Activated CD4-positive, alpha-beta T cell treated with anti-CD3 and anti-CD28 coated beads for 36 hours (primary cell): ENCODE measurements at regions of chr16 and their contacts with region 1.

Region 1: DNA sequence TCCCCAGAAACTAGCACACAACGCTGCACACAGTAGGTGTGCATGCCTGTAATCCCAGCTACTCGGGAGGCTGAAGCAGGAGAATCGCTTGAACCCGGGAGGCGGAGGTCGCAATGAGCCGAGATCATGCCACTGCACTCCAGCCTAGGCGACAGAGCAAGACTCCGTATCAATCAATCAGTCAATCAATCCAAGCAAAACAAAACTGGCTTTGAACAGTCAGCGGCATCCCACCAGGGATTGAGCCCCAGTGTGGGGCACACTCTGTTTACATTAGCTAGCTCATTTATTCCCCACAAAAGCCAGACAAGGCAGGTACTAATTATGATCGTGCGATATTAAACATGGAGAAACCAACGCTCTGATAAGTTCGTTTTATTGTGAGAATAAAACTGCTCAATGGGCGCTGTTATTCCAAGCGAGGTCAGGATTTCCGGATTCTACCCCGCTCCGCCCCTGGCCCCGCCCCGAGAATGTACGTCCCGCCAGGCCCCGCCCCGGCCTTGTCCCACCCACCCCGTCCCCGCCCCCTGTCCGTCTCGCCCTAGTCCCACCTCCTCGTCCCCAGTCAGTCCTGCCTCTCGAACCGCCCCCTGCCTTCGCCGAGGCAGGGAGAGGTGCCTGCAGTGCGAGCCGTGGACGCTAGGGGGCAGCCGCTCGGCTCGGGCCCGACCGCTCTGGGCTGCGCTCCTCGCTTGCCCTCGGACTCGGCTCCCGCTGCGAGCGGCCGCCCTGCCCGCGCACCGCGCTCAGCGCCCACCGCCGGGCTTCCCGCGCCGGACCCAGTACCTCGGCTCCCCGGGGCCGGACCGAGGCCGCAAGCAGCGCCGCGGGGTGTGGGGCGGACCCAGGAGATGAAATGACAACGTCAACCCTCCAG is at the start of gene VPS4A:
- DNase-seq: peak; percentile 98
- ATAC-seq: peak; percentile 97
- H3K4me3 Mint-ChIP-seq: peak within 1 kb of the TSS; percentile 100
- H3K27ac Mint-ChIP-seq: peak within 1 kb of the TSS; percentile 97
- H3K4me1 Mint-ChIP-seq: peaks cover 26% of the 10 kb centered on the region
- H3K27me3 Mint-ChIP-seq: no peaks in the 10 kb centered on the region
- total RNA-seq, gene VPS4A: 28.4 to 31.9 TPM

Region 2: DNA sequence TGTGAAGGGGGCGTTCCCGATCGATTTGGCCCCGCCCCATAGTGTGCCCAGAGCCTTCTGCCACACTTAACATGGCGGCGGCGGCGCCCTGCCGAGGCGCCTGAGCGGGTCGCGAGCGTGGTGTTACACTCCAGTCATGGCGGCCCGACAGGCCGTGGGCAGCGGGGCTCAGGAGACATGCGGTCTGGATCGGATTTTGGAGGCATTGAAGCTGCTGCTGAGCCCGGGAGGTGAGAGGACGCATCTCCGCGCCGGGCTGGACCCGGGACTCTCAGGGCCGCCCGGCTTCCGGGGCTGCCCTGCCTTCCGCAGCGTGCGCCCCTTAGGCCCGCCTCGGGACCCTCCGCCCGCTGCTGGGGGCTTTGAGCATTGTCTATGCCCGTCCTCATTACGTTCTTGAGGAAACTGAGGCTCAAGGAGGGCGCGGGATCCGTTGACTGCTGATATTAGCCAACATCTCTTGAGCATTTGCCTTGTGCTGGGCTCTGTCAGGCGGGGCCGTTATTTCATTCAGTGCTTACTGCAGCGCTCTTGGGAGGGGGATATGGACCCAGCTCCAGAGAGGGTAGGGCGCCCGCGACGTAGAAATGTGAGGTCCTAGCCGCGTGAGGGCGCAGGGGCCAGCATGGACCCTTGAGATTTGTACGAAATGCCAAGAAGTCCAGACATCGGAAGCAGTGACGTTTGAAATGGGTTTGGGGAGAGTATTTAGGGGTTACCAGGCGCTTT is 467.2 kb before region 1 on chr16 and contains the start of gene TANGO6:
- CTCF ChIA-PET with region 1: no interaction called
- POLR2A ChIA-PET with region 1: no interaction called
- intact Hi-C with region 1: loop called in 1 of 2 experiments (anchors 1 kb)
- DNase-seq: peak; percentile 95
- ATAC-seq: peak; percentile 93
- H3K4me3 Mint-ChIP-seq: peak within 1 kb of the TSS; percentile 84
- H3K27ac Mint-ChIP-seq: peak within 1 kb of the TSS; percentile 91
- H3K4me1 Mint-ChIP-seq: peaks cover 27% of the 10 kb centered on the region
- H3K27me3 Mint-ChIP-seq: no peaks in the 10 kb centered on the region
- total RNA-seq, gene TANGO6: 29.7 to 31.2 TPM

Region 3: GRCh38 chr16:69186642-69187445 is 124.0 kb before region 1 on chr16 and contains the start of gene SNTB2:
- CTCF ChIA-PET with region 1: no interaction called
- POLR2A ChIA-PET with region 1: no interaction called
- intact Hi-C with region 1: loop called in 1 of 2 experiments (anchors 1 kb)
- DNase-seq: peak; percentile 91
- ATAC-seq: peak; percentile 83
- H3K4me3 Mint-ChIP-seq: peak within 1 kb of the TSS; percentile 83
- H3K27ac Mint-ChIP-seq: peak within 1 kb of the TSS; percentile 96
- H3K4me1 Mint-ChIP-seq: peaks cover 50% of the 10 kb centered on the region
- H3K27me3 Mint-ChIP-seq: no peaks in the 10 kb centered on the region
- total RNA-seq, gene SNTB2: 15.7 to 17.2 TPM

Region 4: DNA sequence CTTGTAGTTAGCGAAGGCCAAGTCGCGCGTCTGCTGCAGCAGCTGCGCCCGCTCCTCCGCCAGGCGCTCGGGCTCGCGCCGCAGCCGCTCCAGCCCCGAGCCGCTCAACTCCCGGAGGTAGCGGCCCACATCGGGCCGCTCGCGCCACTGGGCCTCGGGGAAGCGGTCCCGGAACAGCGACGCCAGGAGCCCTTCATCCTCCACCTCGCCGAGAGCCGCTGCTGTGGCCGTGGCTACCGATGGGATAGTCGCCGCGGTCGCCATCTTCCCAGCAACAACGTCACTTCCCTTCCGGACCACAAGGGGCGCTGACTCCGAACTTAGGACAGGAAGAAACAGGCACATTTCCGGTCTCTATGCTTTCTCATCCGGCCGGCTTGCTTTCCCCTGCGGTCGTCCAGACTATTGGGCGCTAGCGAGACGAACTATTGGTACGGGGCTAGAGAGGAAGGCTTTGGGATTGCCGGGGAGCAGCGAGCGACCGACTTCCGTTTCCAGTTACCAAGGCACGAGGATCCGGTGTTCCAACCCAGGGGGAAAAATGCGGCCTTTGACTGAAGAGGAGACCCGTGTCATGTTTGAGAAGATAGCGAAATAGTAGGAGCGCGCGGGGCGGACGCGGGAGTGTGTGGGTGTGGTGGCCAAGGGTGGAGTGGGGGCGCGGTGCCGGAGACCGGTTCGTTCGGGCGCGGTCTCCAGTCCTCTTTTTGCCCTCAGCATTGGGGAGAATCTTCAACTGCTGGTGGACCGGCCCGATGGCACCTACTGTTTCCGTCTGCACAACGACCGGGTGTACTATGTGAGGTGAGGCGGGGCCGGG is 28.6 kb after region 1 on chr16 and contains the starts of genes COG8 and NIP7:
- CTCF ChIA-PET with region 1: interaction called, 3 read pairs
- POLR2A ChIA-PET with region 1: interaction called, 3 read pairs
- intact Hi-C with region 1: loop called in 1 of 2 experiments (anchors 1 kb)
- DNase-seq: peak; percentile 95
- ATAC-seq: peak; percentile 89
- H3K4me3 Mint-ChIP-seq: peak within 1 kb of the TSS; percentile 96
- H3K27ac Mint-ChIP-seq: peak within 1 kb of the TSS; percentile 98
- H3K4me1 Mint-ChIP-seq: peaks cover 37% of the 10 kb centered on the region
- H3K27me3 Mint-ChIP-seq: no peaks in the 10 kb centered on the region
- total RNA-seq, gene COG8: 30.0 to 30.3 TPM
- total RNA-seq, gene NIP7: 39.1 to 41.3 TPM

Region 5: DNA sequence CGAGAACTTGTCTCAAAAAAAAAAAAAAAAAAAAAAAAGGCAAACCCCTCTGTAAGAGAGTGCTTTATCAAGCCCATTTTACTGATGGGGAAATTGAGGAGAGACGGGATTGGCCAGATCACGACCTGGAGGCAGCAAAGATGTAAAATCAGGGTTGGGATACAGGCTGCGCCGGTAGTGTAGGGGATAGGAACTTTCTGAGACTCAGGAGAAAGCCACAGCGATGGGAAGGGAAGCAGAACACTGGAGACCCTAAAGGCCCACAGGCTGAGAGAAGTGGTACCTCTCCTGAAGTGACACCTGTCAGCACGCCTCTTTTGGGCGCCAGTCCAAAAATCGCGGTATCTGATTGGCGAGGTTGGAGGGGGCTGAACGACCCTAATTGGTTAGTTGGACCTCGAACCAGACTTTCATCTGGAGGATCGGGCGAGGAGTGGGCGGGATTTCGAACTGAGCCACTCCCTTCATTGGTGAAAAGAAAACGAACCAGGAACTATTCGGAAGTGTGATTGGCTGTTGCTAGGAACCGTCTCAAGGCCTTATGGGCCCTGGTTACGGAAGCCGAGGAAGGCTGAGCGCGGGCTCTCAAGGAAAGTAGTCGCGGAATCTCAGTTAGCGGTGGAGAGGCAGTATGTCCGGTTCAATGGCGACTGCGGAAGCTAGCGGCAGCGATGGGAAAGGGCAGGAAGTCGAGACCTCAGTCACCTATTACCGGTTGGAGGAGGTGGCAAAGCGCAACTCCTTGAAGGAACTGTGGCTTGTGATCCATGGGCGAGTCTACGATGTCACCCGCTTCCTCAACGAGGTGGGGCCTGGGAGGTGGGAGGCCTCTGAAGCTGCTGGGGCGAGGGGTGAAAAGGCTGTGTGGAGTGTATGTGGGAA is 113.4 kb after region 1 on chr16 and contains the start of gene CYB5B:
- CTCF ChIA-PET with region 1: no interaction called
- POLR2A ChIA-PET with region 1: no interaction called
- intact Hi-C with region 1: loop called in 1 of 2 experiments (anchors 1 kb)
- DNase-seq: peak; percentile 98
- ATAC-seq: peak; percentile 97
- H3K4me3 Mint-ChIP-seq: peak within 1 kb of the TSS; percentile 96
- H3K27ac Mint-ChIP-seq: peak within 1 kb of the TSS; percentile 93
- H3K4me1 Mint-ChIP-seq: peaks cover 35% of the 10 kb centered on the region
- H3K27me3 Mint-ChIP-seq: no peaks in the 10 kb centered on the region
- total RNA-seq, gene CYB5B: 158 to 187 TPM

Region 6: DNA sequence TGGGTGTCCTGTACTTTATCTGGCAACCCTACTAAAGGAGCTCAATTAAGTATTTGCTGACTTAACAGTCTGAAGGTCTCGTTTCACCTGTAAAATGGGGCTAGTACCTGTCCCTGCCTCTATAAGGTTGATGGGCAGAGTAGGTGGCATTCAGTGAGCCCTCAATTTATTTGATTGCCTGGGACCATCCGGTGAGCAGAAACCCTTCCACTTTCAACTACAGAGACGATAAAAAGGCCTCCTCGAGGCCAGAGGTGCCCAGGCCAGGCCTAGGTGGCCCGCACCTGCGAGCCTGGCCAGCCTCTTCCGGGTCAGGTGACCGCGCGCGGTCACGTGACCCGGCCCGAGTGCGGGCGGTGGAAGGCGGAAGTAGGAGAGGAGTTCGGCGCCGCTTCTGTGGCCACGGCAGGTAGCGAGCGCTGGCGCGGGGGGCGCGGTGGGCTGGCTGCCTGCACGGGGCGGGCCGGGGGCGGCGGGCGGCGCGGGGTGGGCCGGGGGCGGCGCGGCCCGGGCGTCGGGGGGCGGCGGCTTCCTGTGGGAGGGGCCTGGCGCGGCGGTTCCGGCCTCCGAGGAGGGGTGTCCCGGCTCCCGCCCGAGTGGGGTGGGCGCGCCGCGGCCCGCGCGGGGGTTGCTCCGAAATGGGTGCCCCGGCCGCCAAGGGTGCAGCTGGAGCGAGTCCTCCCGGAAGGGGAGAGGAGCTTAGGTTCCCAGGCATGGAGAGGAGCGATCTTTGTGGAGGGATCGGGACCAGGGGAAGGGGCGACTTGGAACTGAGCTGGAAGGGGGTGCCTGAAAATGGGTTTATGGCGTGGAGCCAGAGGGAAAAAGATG is 451.3 kb after region 1 on chr16 and contains the start of gene WWP2:
- CTCF ChIA-PET with region 1: no interaction called
- POLR2A ChIA-PET with region 1: no interaction called
- intact Hi-C with region 1: loop called in 1 of 2 experiments (anchors 2 kb)
- DNase-seq: peak; percentile 86
- ATAC-seq: peak; percentile 76
- H3K4me3 Mint-ChIP-seq: peak within 1 kb of the TSS; percentile 91
- H3K27ac Mint-ChIP-seq: peak within 1 kb of the TSS; percentile 98
- H3K4me1 Mint-ChIP-seq: peaks cover 35% of the 10 kb centered on the region
- H3K27me3 Mint-ChIP-seq: no peaks in the 10 kb centered on the region
- total RNA-seq, gene WWP2: 43.3 to 44.6 TPM